ENCODE measurements at regions of chr16 and their contacts with region 1.

Region 1: GRCh38 chr16:3321802-3322201 is 16.5 kb downstream of the ZNF75A start:
- DNase-seq: no peak
- ATAC-seq: no peak
- H3K4me3 ChIP-seq: peak overlapping the region in 1 of 4 donors; percentile 6
- H3K27ac ChIP-seq: no peak overlapping the region
- H3K4me1 ChIP-seq: no peaks in the 10 kb centered on the region
- H3K27me3 ChIP-seq: peaks cover 0 to 7% (median 0%) of the 10 kb centered on the region in 3 donors
- CTCF ChIP-seq: no peak
- POLR2A ChIP-seq: no peak

Region 2: DNA sequence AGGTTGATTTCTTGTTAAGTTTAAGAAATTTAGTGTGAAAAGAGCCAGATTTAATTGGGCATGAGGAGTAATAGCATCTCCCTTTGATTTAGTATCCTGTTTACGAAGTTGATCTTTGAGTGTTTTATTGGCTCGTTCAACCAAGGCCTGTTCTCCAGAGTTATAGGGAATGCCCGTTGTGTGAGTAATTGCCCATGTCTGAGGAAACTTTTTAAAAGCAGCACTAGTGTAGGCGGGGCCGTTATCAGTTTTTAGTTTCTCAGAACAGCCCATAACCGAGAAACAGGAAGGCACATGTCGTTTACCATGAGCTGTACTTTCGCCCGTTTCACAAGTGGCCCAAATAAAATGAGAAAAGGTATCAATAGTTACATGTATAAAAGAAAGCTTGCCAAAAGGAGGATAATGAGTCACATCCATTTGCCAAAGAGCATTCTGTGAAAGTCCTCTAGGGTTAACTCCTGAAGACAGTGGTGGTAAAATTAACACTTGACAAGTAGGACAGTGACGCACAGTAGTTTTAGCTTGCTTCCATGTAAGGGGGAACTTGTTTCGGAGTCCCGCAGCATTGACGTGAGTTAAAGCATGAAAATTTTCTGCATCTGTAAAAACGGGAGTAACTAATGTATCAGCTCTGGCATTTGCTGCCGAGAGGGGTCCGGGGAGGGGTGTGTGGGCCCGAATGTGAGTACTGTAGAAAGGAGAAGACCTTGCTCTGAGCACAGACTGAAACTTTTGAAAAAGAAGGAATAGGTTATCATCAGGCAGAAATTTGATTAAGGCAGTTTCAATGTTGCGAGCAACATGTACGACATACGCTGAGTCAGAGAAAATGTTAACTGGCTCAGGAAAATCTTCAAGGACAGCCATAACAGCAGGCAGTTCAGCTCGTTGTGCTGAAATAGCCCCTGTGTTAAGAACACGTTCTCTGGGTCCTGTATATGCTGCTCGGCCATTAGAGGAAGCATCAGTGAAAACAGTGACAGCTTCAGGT is 658.0 kb before region 1 on chr16:
- in situ Hi-C with region 1: no loop called
- intact Hi-C with region 1: no loop called
- DNase-seq: no peak
- ATAC-seq: no peak
- H3K4me3 ChIP-seq: no peak overlapping the region
- H3K27ac ChIP-seq: no peak overlapping the region
- H3K4me1 ChIP-seq: no peaks in the 10 kb centered on the region
- H3K27me3 ChIP-seq: no peaks in the 10 kb centered on the region
- CTCF ChIP-seq: no peak
- POLR2A ChIP-seq: no peak

Region 3: GRCh38 chr16:3374385-3374784 is 52.6 kb after region 1 on chr16:
- in situ Hi-C with region 1: no loop called
- intact Hi-C with region 1: no loop called
- DNase-seq: no peak
- ATAC-seq: no peak
- H3K4me3 ChIP-seq: no peak overlapping the region
- H3K27ac ChIP-seq: no peak overlapping the region
- H3K4me1 ChIP-seq: no peaks in the 10 kb centered on the region
- H3K27me3 ChIP-seq: no peaks in the 10 kb centered on the region
- CTCF ChIP-seq: no peak
- POLR2A ChIP-seq: no peak

Region 4: GRCh38 chr16:3431779-3432219 is 110.0 kb after region 1 on chr16:
- in situ Hi-C with region 1: loop called in 1 of 4 experiments (anchors 5 kb)
- intact Hi-C with region 1: no loop called
- DNase-seq: no peak
- ATAC-seq: no peak
- H3K4me3 ChIP-seq: peak overlapping the region in 3 of 4 donors; percentile 5 to 29 (median 7)
- H3K27ac ChIP-seq: no peak overlapping the region
- H3K4me1 ChIP-seq: no peaks in the 10 kb centered on the region
- H3K27me3 ChIP-seq: no peaks in the 10 kb centered on the region
- CTCF ChIP-seq: no peak
- POLR2A ChIP-seq: no peak

Region 5: DNA sequence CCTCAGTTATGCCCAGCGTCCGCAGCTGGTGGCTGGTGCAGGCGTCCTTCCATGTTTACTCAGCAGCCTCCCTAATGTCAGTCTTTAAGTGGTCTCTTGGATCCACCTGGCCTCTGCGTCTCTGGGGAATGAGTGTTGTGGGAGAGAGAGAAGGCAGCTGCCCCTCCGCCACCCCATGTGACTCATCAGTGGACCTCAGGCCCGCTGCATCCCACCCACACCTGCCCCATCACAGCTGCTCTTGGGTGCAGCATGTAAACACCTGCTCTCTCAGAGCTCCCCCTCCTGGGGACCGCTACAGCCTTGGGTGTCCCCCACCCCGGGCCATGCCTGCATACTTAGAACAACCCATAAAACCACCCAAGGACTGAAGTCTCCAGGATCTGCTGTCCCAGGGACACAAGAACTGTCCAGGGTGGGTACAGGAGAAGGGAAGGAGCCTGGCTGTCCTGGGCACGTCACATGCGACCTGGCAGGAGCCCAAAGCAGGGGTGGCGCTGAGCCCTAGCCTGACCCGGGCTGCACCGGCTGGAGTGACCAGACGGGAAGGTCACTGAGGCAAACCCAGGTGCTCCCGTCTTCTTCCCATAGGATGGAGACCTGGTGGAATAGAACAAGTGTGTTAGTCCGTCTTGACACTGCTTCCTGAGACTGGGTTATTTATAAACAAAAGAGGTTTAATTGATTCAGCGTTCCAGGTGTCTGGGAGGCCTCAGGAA is 169.3 kb after region 1 on chr16:
- in situ Hi-C with region 1: no loop called
- intact Hi-C with region 1: no loop called
- DNase-seq: no peak
- ATAC-seq: no peak
- H3K4me3 ChIP-seq: no peak overlapping the region
- H3K27ac ChIP-seq: no peak overlapping the region
- H3K4me1 ChIP-seq: no peaks in the 10 kb centered on the region
- H3K27me3 ChIP-seq: no peaks in the 10 kb centered on the region
- CTCF ChIP-seq: no peak
- POLR2A ChIP-seq: no peak